WTC11 (cell line): ENCODE measurements at regions of chr1 and their contacts with region 1.

Region 1: GRCh38 chr1:9615316-9616063 is 26.8 kb downstream of the TMEM201 start:
- DNase-seq: peak; percentile 85
- ATAC-seq: peak; percentile 96
- H3K4me3 Mint-ChIP-seq: no peak overlapping the region
- H3K27ac Mint-ChIP-seq: 0 out of 2 replicates have a peak overlapping the region, but pooled peaks have one; percentile 60
- H3K4me1 Mint-ChIP-seq: peaks cover 2% of the 10 kb centered on the region; the same call in 1 of the 2 replicates
- H3K27me3 Mint-ChIP-seq: no peaks in the 10 kb centered on the region
- CTCF ChIP-seq: peak; percentile 52

Region 2: DNA sequence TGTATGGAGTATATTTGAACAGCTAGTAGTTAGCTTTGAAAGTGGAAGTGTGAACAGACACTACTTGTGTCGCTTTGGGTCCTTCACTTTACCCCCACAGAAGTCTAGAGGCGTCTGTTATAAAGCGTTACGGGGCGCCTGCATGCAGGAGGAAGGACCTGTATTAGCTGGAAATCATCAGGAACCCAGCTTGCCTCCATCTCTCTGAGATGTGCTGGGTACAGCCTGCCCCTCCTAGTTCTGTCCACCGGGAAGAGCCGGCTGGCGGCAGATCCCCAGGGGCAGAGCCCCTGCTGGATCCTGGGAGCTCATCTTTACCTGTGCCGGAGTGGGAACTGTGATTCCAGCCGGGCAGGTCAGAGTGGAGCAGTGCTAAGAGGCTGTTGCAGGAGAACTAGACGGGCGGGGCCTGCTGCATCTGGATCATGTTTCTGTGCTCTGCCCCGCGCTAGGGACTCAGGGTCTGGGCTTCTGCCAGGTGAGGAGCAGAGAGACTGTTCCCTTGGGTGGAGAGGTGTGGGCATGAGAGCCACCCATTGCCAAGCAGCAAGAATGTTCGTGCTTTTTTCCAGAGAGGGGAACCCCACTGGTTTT is 345.1 kb before region 1 on chr1:
- CTCF ChIA-PET with region 1: interaction called, 10 read pairs
- POLR2A ChIA-PET with region 1: no interaction called
- DNase-seq: no peak
- ATAC-seq: peak; percentile 21
- H3K4me3 Mint-ChIP-seq: no peak overlapping the region
- H3K27ac Mint-ChIP-seq: no peak overlapping the region
- H3K4me1 Mint-ChIP-seq: peaks cover 11% of the 10 kb centered on the region
- H3K27me3 Mint-ChIP-seq: no peaks in the 10 kb centered on the region; the same call in 1 of the 2 replicates
- CTCF ChIP-seq: no peak

Region 3: GRCh38 chr1:9537863-9538668 is 77.4 kb before region 1 on chr1:
- CTCF ChIA-PET with region 1: no interaction called
- POLR2A ChIA-PET with region 1: no interaction called
- DNase-seq: no peak
- ATAC-seq: no peak
- H3K4me3 Mint-ChIP-seq: no peak overlapping the region
- H3K27ac Mint-ChIP-seq: peak overlapping the region; percentile 93
- H3K4me1 Mint-ChIP-seq: peaks cover 30% of the 10 kb centered on the region
- H3K27me3 Mint-ChIP-seq: no peaks in the 10 kb centered on the region
- CTCF ChIP-seq: no peak

Region 4: DNA sequence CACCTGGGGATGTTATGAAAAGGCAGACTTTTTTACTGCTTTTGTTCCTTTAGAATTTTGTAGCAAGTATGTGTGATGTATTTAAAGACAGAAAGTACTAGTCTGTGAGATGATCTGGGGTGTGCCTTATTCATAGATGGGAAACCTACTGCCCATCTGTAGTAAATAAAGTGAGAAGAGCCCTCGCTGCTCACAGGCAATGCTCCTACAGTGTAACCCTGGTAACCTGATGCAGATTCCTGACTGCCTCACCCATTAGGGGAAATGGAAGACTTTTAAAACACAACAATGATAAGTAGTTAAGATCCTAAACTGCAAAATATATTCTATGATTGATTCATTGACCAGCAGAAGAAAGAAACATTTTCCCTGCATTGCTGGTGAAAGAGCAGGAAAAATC is 46.2 kb before region 1 on chr1:
- CTCF ChIA-PET with region 1: no interaction called
- POLR2A ChIA-PET with region 1: no interaction called
- DNase-seq: no peak
- ATAC-seq: no peak
- H3K4me3 Mint-ChIP-seq: no peak overlapping the region
- H3K27ac Mint-ChIP-seq: no peak overlapping the region
- H3K4me1 Mint-ChIP-seq: no peaks in the 10 kb centered on the region
- H3K27me3 Mint-ChIP-seq: no peaks in the 10 kb centered on the region
- CTCF ChIP-seq: no peak

Region 5: DNA sequence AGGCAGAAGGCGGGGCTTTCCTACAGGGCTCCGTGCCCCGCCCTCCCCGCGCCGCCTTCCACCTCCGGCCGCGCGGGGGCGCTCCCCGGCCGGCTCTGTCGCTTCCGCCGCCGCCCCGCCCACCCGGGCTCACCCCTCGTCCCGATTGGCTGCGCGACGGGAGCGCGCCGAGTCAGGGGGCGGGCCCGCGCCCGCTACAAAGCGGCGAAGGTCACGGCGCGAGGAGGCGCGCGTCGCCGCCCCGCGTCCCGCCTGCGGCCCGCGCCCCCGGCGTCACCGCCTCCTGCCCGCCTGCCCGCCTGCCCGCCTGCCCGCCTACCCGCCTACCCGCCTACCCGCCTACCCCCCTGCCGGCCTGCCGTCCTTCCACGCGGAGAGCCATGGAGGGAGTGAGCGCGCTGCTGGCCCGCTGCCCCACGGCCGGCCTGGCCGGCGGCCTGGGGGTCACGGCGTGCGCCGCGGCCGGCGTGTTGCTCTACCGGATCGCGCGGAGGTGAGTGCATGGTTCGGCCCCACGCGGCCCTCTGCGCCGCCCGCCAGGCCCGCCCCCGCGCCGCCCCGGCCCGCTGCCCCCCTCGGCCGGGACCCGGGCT is 26.8 kb before region 1 on chr1 and contains the start of gene TMEM201:
- CTCF ChIA-PET with region 1: interaction called, 93 read pairs
- POLR2A ChIA-PET with region 1: no interaction called
- DNase-seq: peak; percentile 91
- ATAC-seq: peak; percentile 85
- H3K4me3 Mint-ChIP-seq: peak within 1 kb of the TSS; percentile 77
- H3K27ac Mint-ChIP-seq: peak within 1 kb of the TSS; percentile 14; the same call in 1 of the 2 replicates
- H3K4me1 Mint-ChIP-seq: peaks cover 41% of the 10 kb centered on the region
- H3K27me3 Mint-ChIP-seq: no peaks in the 10 kb centered on the region
- CTCF ChIP-seq: peak; percentile 75
- total RNA-seq, gene TMEM201: 25.9 to 30.4 TPM (median 26.7 TPM) in 3 replicates

Region 6: DNA sequence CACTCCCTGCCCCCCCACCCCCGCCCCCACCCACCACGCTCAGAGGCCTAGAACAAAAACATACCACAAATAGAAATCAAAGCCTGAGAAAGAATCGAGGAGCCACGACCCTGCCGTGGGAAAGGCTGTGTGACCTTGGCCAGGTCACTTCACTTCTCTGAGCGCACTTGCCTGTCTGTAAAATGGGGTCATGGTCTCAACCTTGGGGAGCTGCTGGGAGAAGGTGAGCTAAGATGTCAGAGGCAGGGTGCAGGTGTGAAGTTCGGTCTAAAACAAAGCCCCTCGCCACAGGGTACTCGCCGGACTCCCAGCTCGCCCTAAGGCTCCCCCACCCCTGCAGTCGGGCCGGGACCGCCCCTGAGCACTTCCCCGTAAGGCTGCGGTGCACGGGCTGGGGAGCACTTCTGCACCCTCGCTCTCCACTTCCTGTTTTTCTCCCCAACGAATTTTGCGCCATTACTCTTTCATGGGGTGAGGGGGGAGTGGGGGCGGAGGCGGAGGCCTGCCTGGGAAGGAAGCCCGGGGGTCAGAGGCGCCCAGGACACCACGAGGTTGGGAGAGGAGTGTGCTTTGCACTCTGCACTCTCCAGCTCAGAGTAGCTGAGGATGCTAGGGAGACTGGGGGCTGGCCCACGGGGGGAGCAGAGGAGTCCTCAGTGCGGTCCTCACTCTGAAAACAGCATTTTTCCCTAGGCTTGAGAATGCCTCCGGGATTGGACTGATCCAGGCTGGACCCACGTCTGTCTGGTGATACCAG is 14.1 kb after region 1 on chr1:
- CTCF ChIA-PET with region 1: interaction called, 63 read pairs
- POLR2A ChIA-PET with region 1: no interaction called
- DNase-seq: no peak
- ATAC-seq: no peak
- H3K4me3 Mint-ChIP-seq: no peak overlapping the region
- H3K27ac Mint-ChIP-seq: no peak overlapping the region
- H3K4me1 Mint-ChIP-seq: peaks cover 5% of the 10 kb centered on the region
- H3K27me3 Mint-ChIP-seq: peaks cover 19% of the 10 kb centered on the region
- CTCF ChIP-seq: no peak

Region 7: DNA sequence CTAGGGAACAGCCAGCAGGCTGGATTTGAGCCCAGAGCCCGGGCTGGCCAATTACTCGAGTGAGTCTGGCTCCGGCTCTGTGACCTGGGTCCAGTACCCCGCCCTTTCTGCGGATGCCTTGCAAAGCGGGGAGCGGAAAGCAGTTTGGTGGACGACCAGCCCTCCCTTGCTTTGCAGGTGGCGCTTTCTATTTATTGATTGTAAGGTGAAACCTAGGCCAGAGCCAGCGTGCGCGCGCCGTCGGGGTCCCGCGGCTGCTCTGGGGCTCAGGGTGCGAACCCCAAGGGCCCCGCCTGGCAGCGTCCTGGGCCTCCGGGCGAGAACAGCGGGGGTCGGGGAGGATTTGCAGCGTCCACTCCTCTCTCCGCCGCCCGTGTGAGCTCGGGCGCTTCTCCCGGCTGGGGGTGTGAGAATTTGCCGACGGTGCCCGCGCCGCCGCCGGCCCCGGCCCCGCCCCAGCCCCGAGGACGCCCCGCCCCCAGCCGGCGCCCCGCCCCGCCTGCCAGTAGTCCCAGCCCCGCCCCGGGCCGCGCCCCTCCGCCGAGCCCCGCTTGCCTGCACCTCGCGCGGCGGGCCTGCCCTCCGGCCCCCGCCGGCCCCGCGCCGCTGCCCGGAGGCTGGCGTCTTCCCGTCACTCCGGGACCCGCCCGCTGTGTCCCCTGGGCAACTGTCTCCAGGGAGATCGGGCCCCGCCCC is 73.7 kb after region 1 on chr1:
- CTCF ChIA-PET with region 1: interaction called, 35 read pairs
- POLR2A ChIA-PET with region 1: no interaction called
- DNase-seq: peak; percentile 92
- ATAC-seq: peak; percentile 79
- H3K4me3 Mint-ChIP-seq: peak overlapping the region; percentile 77
- H3K27ac Mint-ChIP-seq: no peak overlapping the region
- H3K4me1 Mint-ChIP-seq: peaks cover 36% of the 10 kb centered on the region
- H3K27me3 Mint-ChIP-seq: peaks cover 40% of the 10 kb centered on the region
- CTCF ChIP-seq: no peak

Region 8: GRCh38 chr1:9849691-9850441 is 234.4 kb after region 1 on chr1:
- CTCF ChIA-PET with region 1: interaction called, 10 read pairs
- POLR2A ChIA-PET with region 1: no interaction called
- DNase-seq: no peak
- ATAC-seq: peak; percentile 57
- H3K4me3 Mint-ChIP-seq: peak overlapping the region; percentile 68
- H3K27ac Mint-ChIP-seq: no peak overlapping the region
- H3K4me1 Mint-ChIP-seq: peaks cover 38% of the 10 kb centered on the region
- H3K27me3 Mint-ChIP-seq: no peaks in the 10 kb centered on the region
- CTCF ChIP-seq: no peak